ENCODE measurements at regions of chr10 and their contacts with region 1.

Region 1: DNA sequence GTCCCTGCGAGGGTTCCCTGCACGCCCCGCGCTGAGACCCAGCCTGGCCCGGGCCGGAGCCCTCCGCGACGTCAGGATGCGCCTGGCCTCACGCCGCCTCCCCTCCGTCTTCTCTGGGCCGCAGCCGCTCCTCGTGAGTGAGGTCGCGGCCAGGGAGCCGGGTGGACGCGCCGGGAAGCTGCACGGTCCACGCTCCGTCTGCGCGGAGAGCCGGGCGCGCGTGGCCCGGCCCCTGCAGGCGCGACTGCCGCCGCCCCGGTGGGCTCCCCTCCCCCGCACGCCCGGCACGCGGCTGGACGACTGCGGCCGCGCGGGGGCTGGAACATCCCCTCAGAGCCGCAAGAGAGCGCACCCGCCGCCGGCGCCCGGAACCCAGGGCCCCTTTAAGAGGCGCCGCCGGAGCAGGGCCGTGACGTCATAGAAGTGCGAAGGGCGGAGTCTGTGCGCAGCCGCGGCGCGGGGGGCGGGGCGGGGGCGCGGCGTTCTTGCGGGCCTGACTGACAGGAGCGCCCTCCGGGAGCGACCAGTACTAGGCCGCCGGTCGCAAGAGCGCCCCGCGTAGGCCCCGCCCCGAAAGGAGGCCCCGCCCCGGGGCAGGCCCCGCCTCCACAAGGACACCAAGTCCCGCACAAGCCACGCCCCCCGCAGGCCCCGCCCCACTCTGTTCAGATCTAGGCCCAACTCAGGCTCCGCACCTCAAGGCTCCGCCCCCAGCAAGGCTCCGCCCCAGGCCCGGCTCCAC is 445 bp upstream of the INPP5A start:
- DNase-seq: peak; percentile 100
- ATAC-seq: peak; percentile 94 to 97 (median 95)
- H3K4me3 ChIP-seq: peak overlapping the region; percentile 52 to 86 (median 72)
- H3K27ac ChIP-seq: peak overlapping the region; percentile 75 to 97 (median 90)
- H3K4me1 ChIP-seq: peaks cover 24 to 56% (median 54%) of the 10 kb centered on the region in 9 donors
- H3K27me3 ChIP-seq: no peaks in the 10 kb centered on the region
- CTCF ChIP-seq: peak; percentile 22 to 65 (median 44)

Region 2: GRCh38 chr10:132571650-132572535 is 34.8 kb after region 1 on chr10:
- intact Hi-C with region 1: loop called in 1 of 10 experiments (anchors 5 kb)
- DNase-seq: peak in 1 of 2 donors; percentile 64
- ATAC-seq: peak; percentile 44 to 95 (median 81)
- H3K4me3 ChIP-seq: no peak overlapping the region
- H3K27ac ChIP-seq: peak overlapping the region in 9 of 10 donors; percentile 7 to 58 (median 45)
- H3K4me1 ChIP-seq: peaks cover 35 to 56% (median 51%) of the 10 kb centered on the region in 9 donors
- H3K27me3 ChIP-seq: no peaks in the 10 kb centered on the region
- CTCF ChIP-seq: no peak

Region 3: DNA sequence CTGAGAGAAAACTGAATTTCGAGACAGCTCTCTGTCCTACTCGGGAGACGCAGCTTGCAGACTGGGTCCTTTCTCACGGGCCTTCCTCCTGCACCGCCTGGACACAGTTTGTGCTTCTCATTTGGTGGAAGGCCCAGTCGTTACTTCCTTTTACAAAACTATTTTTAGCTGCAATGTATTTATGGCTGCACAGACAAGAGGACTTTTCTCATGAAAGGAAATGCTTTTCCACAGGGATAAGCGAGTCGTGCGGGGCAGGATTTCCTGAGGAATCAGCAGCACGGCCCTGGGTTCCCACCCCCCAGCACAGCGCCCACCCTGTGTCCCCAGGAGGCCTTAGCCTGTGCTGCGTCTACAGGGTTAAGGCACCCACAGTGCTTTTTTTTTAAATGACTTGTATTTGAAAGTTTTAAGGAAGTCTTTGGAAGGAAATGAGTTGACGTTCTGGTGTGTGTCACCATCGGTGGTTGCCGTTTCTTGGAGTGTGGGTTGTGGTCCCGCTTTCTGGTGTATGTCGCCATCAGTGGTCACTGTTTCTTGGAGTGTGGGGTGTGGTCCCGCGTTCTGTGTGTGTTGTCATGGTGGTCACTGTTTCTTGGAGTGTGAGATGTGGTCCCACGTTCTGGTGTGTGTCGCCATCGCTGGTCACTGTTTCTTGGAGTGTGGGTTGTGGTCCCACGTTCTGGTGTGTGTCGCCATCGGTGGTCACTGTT is 51.3 kb after region 1 on chr10:
- intact Hi-C with region 1: loop called in 4 of 10 experiments (anchors 1 to 5 kb)
- DNase-seq: peak; percentile 61 to 84
- ATAC-seq: peak; percentile 47 to 83 (median 75)
- H3K4me3 ChIP-seq: peak overlapping the region in 8 of 10 donors; percentile 17 to 29 (median 24)
- H3K27ac ChIP-seq: peak overlapping the region; percentile 64 to 91 (median 80)
- H3K4me1 ChIP-seq: peaks cover 56 to 100% (median 94%) of the 10 kb centered on the region in 9 donors
- H3K27me3 ChIP-seq: no peaks in the 10 kb centered on the region
- CTCF ChIP-seq: no peak

Region 4: GRCh38 chr10:132627666-132628531 is 90.8 kb after region 1 on chr10:
- intact Hi-C with region 1: loop called in 5 of 10 experiments (anchors 2 to 10 kb)
- DNase-seq: peak; percentile 53 to 55
- ATAC-seq: peak; percentile 5 to 37 (median 16)
- H3K4me3 ChIP-seq: peak overlapping the region in 6 of 10 donors; percentile 10 to 35 (median 28)
- H3K27ac ChIP-seq: peak overlapping the region; percentile 76 to 97 (median 86)
- H3K4me1 ChIP-seq: peaks cover 49 to 81% (median 73%) of the 10 kb centered on the region in 9 donors
- H3K27me3 ChIP-seq: no peaks in the 10 kb centered on the region
- CTCF ChIP-seq: no peak